ENCODE measurements at regions of chr11 and their contacts with region 1.

Region 1: GRCh38 chr11:76674517-76675400 is 4.2 kb upstream of the LRRC32 start:
- DNase-seq: peak in 2 of 5 donors; percentile 26 to 35
- H3K4me3 ChIP-seq: no peak overlapping the region
- H3K27ac ChIP-seq: no peak overlapping the region
- H3K4me1 ChIP-seq: peaks cover 0 to 12% (median 0%) of the 10 kb centered on the region in 3 donors
- H3K27me3 ChIP-seq: no peaks in the 10 kb centered on the region
- CTCF ChIP-seq: no peak

Region 2: GRCh38 chr11:76551400-76551799 is 123.4 kb before region 1 on chr11:
- intact Hi-C with region 1: loop called (anchors 5 kb)
- DNase-seq: peak in 1 of 5 donors; percentile 27
- H3K4me3 ChIP-seq: no peak overlapping the region
- H3K27ac ChIP-seq: no peak overlapping the region
- H3K4me1 ChIP-seq: no peaks in the 10 kb centered on the region
- H3K27me3 ChIP-seq: no peaks in the 10 kb centered on the region
- CTCF ChIP-seq: no peak

Region 3: GRCh38 chr11:76962583-76963416 is 288.0 kb after region 1 on chr11:
- intact Hi-C with region 1: no loop called
- DNase-seq: peak in 2 of 5 donors; percentile 10 to 24
- H3K4me3 ChIP-seq: no peak overlapping the region
- H3K27ac ChIP-seq: no peak overlapping the region
- H3K4me1 ChIP-seq: no peaks in the 10 kb centered on the region
- H3K27me3 ChIP-seq: no peaks in the 10 kb centered on the region
- CTCF ChIP-seq: no peak

Measured in kidney (tissue), 22 donors.